ENCODE measurements at regions of chr12 and their contacts with region 1.

Region 1: DNA sequence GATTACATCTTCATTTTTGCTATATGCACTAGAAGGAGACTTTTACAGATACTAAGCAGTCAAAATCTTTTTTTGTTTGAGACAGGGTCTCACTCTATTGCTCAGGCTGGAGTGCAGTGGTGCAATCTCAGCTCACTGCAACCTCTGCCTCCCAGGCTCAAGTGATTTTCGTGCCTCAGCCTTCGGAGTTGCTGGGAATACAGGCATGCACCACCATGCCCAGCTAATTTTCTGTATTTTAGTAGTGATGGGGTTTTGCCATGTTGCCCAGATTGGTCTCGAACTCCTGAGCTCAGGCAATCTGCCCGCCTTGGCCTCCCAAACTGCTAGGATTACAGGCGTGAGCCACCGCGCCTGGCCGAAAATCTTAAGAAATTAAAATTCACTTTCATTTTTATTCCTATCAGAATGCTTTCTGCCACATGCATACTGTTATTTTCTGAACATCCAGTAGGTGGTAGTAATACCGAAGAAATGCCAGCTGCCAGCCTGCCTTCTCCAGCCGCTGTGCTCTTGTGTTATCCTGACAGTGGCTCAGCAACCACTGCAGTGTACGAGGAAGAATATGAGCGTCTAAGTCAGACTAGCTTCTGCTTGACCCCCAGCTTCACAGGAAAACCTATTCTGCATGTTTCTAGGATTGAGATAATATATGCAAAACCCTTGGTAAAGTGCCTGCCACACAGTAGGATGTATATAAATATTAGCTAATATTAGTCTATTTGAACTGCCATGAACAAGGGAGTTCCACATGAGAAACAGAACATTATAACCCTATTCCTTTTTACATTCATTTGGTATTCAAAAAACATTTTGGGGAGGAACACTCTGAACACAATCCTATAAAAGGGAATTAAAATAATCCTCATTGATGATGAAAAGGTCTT is 54.2 kb downstream of the RPAP3 start:
- DNase-seq: peak; percentile 65
- ATAC-seq: peak; percentile 87
- H3K4me3 Mint-ChIP-seq: no peak overlapping the region
- H3K27ac Mint-ChIP-seq: no peak overlapping the region
- H3K4me1 Mint-ChIP-seq: peaks cover 7% of the 10 kb centered on the region
- H3K27me3 Mint-ChIP-seq: no peaks in the 10 kb centered on the region

Region 2: GRCh38 chr12:47504775-47505446 is 146.7 kb before region 1 on chr12:
- CTCF ChIA-PET with region 1: no interaction called
- DNase-seq: no peak
- ATAC-seq: no peak
- H3K4me3 Mint-ChIP-seq: no peak overlapping the region
- H3K27ac Mint-ChIP-seq: no peak overlapping the region
- H3K4me1 Mint-ChIP-seq: peaks cover 7% of the 10 kb centered on the region
- H3K27me3 Mint-ChIP-seq: no peaks in the 10 kb centered on the region

Region 3: GRCh38 chr12:47636908-47637780 is 14.5 kb before region 1 on chr12:
- CTCF ChIA-PET with region 1: interaction called, 13 read pairs
- DNase-seq: peak; percentile 48
- ATAC-seq: no peak
- H3K4me3 Mint-ChIP-seq: no peak overlapping the region
- H3K27ac Mint-ChIP-seq: no peak overlapping the region
- H3K4me1 Mint-ChIP-seq: peaks cover 4% of the 10 kb centered on the region
- H3K27me3 Mint-ChIP-seq: no peaks in the 10 kb centered on the region

Region 4: GRCh38 chr12:47686645-47687240 is 35.1 kb after region 1 on chr12:
- CTCF ChIA-PET with region 1: interaction called, 17 read pairs
- DNase-seq: no peak
- ATAC-seq: peak; percentile 57
- H3K4me3 Mint-ChIP-seq: no peak overlapping the region
- H3K27ac Mint-ChIP-seq: no peak overlapping the region
- H3K4me1 Mint-ChIP-seq: no peaks in the 10 kb centered on the region
- H3K27me3 Mint-ChIP-seq: no peaks in the 10 kb centered on the region

Region 5: DNA sequence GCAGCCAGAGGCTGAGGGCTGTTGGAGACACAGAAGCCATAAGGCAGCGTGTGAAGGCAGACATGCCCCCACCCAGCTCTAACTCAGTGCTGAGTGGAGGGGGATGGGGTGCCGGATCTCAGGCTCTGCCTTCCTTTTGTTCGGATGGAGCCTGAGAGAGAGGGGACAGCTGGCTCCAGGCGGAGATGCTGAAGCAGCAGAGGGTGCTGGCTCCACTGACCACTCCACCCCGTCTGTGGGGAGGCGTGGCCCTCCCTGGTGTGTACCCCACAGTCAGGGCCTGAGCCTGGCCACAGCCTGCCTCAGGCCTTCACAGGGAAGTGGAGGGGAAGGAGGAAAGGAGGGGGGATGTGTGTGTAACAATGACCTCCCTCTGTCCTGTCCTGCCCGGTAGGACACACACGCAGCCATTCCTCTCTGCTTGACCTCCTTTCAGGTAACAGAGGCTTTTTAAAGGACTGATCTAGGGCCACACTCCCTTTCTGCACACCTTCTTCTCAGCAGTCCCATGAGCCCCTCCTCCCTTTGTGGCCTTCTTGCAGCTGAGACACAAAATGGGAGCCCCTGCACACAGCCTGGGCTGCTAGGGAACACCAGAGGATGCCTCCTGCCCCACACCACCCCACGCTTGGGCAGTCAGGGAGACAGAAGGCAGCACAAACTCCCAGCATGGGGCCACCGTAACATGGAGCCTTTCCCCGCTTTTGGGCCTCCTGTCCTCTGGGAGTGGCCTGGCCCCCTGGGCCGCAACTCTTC is 83.3 kb after region 1 on chr12:
- CTCF ChIA-PET with region 1: no interaction called
- DNase-seq: no peak
- ATAC-seq: no peak
- H3K4me3 Mint-ChIP-seq: no peak overlapping the region
- H3K27ac Mint-ChIP-seq: no peak overlapping the region
- H3K4me1 Mint-ChIP-seq: no peaks in the 10 kb centered on the region
- H3K27me3 Mint-ChIP-seq: no peaks in the 10 kb centered on the region

Measured in activated CD8-positive, alpha-beta memory T cell treated with anti-CD3 and anti-CD28 coated beads, Interleukin-2, amount 10 ng/mL, durations not matched to agents 7 days and 5 days (primary cell).